GM18951 (cell line): ENCODE measurements at regions of chr3 and their contacts with region 1.

Region 1: DNA sequence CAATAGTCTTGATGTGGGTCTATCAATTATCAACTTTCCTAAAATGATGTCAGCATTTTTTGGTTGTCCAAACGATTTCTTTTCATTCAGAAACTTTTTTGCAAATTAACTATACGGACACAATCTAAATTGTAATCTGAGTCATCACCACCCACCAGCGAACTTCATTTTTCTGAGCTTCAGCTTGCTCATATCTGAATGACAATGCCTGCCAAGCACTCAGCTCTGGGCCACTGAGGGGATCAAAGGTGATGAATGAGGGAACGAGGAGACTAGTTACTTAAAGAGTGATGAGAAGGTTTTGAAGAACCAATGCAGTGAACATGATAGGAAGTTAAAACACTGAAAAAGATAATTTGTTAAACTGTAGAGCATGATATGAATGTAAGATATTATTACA is 14.9 kb upstream of the TBC1D23 start:
- POLR2A ChIP-seq: no peak

Region 2: DNA sequence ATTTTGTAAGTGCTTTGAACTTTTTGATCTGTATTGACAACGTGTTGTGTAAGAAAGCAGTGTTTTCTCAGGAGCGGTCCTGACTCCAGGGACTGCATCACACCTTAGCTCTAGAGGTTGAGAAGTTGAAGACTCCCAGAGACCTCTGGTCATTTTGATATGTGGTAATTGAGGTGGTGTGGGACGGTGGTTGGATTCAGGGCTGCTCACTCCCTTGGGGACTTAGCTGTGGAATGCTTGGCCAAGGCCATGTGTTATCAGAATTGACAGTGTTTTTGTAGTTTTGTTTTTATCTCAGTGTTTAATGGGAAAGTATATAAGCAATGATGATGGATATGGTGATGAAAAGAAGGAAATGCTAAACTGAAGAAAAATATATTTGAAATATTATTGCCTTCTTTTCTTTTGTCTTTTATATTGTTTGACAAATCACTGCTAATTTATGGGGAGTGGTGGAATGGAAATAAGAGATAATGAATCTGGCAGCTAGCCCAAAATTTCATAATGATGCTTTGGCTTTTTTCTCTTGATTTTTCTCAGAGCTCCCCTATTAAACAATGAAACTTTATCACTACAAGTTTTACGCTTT is 412.2 kb before region 1 on chr3:
- in situ Hi-C with region 1: loop called (anchors 5 kb)
- POLR2A ChIP-seq: no peak